Dendritic cell treated with granulocyte-macrophage colony-stimulating factor and Interleukin-4, amounts not matched to agents 40 ng/mL and 50 ng/mL, for 4 days (primary cell): ENCODE measurements at regions of chr1 and their contacts with region 1.

Region 1: DNA sequence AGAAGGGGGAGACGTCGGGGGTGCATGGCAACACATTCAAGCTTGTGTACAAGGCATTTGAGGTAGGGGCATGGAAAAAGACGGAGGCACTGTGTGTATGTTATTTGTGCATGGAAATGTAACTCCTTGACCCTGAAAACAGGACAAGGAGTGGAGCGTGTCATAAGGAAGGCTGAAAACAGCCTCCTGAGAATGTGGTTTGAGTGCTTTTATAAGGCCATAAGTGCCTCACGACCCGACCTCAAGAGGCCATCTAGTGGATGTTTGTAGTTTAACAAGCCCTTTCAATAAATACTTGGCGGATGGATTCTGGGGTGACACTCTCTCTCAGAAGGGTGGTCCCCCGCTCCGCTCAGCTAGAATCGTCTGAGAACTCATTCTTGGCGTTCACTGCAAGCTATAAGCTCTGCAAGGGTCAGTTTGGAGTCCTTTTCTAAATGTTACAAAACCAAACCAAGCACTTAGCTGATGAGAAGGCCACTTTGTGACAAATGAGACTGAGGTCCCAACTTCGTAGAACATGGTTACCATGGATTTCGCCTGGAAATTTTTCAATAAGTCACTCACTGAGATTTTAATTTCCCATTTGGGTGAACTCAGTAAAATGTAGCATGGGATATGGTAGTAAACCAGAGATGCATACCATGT is 38.8 kb upstream of the CLCA4 start:
- H3K4me3 Mint-ChIP-seq: no peak overlapping the region
- H3K27ac Mint-ChIP-seq: no peak overlapping the region
- H3K4me1 Mint-ChIP-seq: peaks cover 7% of the 10 kb centered on the region
- H3K27me3 Mint-ChIP-seq: peaks cover under 1% of the 10 kb centered on the region

Region 2: GRCh38 chr1:86380257-86380861 is 127.7 kb before region 1 on chr1:
- intact Hi-C with region 1: loop called (anchors 2 kb)
- H3K4me3 Mint-ChIP-seq: no peak overlapping the region
- H3K27ac Mint-ChIP-seq: no peak overlapping the region
- H3K4me1 Mint-ChIP-seq: no peaks in the 10 kb centered on the region
- H3K27me3 Mint-ChIP-seq: no peaks in the 10 kb centered on the region

Region 3: GRCh38 chr1:86419277-86419903 is 88.7 kb before region 1 on chr1:
- intact Hi-C with region 1: loop called (anchors 1 kb)
- H3K4me3 Mint-ChIP-seq: peak overlapping the region; percentile 7
- H3K27ac Mint-ChIP-seq: peak overlapping the region; percentile 50
- H3K4me1 Mint-ChIP-seq: peaks cover 11% of the 10 kb centered on the region
- H3K27me3 Mint-ChIP-seq: no peaks in the 10 kb centered on the region

Region 4: GRCh38 chr1:86441581-86441980 is 66.5 kb before region 1 on chr1:
- intact Hi-C with region 1: no loop called
- H3K4me3 Mint-ChIP-seq: no peak overlapping the region
- H3K27ac Mint-ChIP-seq: no peak overlapping the region
- H3K4me1 Mint-ChIP-seq: peaks cover 13% of the 10 kb centered on the region
- H3K27me3 Mint-ChIP-seq: peaks cover 1% of the 10 kb centered on the region